Activated CD4-positive, alpha-beta memory T cell treated with anti-CD3 and anti-CD28 coated beads for 36 hours (primary cell): ENCODE measurements at regions of chr11 and their contacts with region 1.

Region 1: DNA sequence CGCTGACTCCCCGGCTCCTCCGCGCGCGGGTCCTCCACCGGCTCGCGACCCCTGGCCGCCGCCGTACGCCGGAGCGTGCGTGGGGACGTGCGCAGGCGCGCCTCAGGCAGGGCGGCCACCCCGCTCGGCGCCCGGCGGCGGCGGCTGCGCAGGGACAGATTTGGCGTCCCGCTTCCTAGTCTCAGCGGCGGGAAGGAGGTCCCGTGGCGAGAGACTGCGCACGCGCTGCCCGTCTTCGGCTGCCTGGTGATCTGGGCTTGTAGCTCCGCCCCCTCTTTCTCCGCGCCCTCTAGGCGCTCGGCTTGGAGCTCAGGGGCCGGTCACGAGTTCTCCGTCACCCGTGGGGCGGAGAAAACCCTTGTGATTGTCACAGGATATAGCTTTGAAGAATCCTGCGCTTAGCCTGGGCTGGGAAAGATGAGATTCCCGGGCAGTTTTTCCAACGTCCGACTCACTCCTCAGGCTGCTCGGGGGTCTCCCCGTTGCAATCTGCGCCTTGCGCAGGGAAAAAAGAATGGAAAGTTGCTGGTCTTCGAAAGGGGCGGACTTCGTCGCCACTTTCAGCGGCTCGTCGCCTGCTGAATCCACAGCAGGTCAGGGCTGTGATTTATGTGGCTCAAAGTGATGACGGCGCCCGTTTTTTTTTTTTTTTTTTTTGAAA is at the start of gene PATL1:
- DNase-seq: peak; percentile 99
- H3K4me3 Mint-ChIP-seq: peak within 1 kb of the TSS; percentile 95
- H3K27ac Mint-ChIP-seq: peak within 1 kb of the TSS; percentile 97
- H3K4me1 Mint-ChIP-seq: peaks cover 39% of the 10 kb centered on the region
- H3K27me3 Mint-ChIP-seq: no peaks in the 10 kb centered on the region
- total RNA-seq, gene PATL1: 58.3 to 62.3 TPM

Region 2: DNA sequence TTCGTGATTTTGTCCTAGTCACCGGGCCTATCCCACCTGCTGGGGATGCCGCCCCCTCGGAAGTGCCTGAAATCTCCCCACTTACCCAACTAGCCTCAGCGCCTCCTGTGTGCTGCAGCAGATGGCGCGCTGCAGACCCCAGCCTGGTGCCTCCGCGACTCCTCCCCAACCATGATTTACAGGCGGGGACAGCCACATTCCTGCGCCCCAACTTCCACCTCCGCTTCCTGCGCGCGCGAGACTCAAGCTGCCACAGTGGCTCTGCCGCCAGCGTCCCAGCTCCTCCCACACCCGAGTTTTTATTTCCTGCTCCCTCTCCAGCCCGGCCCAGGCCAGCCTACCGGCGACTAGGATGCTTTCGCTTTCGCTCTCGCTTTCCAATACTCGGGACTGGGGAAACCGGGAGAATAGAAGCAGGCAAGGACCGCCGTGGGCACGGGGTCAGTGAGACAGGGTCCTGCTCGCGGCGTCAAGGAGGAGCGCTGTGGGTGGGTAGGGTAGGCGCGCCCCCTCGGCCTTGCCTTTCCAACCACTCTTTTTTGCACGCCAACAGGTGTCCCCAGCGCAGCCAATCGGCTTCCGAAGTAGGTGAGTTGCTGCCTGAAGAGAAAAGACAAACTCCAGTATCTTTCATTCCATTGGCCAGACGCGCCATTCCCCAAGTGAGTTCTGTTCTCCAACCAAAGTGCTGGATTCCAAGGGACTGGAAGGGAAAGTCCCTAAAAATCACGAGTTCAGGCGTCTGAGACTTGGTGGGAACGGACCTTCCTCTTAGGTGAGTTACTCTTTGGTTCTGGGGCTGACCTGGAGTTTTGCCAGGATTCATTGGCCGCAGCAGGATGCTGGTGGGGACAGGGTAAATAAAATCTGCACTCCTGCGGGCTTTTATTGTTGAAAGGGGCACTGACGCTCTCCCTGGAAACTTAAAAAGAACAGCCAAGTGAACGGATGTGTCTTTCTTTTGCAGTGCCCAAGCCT is 526.3 kb before region 1 on chr11 and contains the start of gene FAM111A:
- CTCF ChIA-PET with region 1: no interaction called
- POLR2A ChIA-PET with region 1: no interaction called
- intact Hi-C with region 1: loop called (anchors 10 kb)
- DNase-seq: peak; percentile 90
- H3K4me3 Mint-ChIP-seq: peak within 1 kb of the TSS; percentile 94
- H3K27ac Mint-ChIP-seq: peak within 1 kb of the TSS; percentile 93
- H3K4me1 Mint-ChIP-seq: peaks cover 50% of the 10 kb centered on the region
- H3K27me3 Mint-ChIP-seq: no peaks in the 10 kb centered on the region
- total RNA-seq, gene FAM111A: 87.6 to 87.8 TPM

Region 3: GRCh38 chr11:59534676-59535075 is 134.4 kb before region 1 on chr11:
- CTCF ChIA-PET with region 1: interaction called, 10 read pairs
- POLR2A ChIA-PET with region 1: no interaction called
- intact Hi-C with region 1: loop called (anchors 5 kb)
- DNase-seq: no peak
- H3K4me3 Mint-ChIP-seq: no peak overlapping the region
- H3K27ac Mint-ChIP-seq: no peak overlapping the region
- H3K4me1 Mint-ChIP-seq: peaks cover 11% of the 10 kb centered on the region
- H3K27me3 Mint-ChIP-seq: peaks cover 3% of the 10 kb centered on the region

Region 4: GRCh38 chr11:59560702-59561469 is 108.2 kb before region 1 on chr11:
- CTCF ChIA-PET with region 1: no interaction called
- POLR2A ChIA-PET with region 1: interaction called, 5 read pairs
- intact Hi-C with region 1: loop called (anchors 1 kb)
- DNase-seq: peak; percentile 90
- H3K4me3 Mint-ChIP-seq: peak overlapping the region; percentile 93
- H3K27ac Mint-ChIP-seq: peak overlapping the region; percentile 96
- H3K4me1 Mint-ChIP-seq: peaks cover 42% of the 10 kb centered on the region
- H3K27me3 Mint-ChIP-seq: peaks cover 4% of the 10 kb centered on the region

Region 5: DNA sequence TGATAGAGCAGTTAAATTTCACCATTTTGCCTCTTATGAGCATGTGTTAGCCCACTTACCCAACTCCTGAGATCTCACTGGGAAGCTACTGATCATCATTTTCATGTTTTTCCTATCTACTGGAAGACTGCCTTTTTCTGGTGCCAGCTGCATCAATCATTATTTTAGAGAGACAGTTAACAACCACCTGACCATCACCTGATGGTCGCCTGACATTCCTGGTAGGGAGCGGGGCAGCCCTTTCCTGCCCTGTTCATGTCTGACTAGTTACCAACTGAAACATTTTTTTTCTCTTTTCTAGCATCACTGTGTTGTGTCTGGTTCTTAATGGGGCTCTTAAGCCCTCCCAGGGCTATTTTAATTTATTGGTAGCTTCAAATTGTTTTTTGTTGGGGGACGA is 19.9 kb after region 1 on chr11:
- CTCF ChIA-PET with region 1: no interaction called
- POLR2A ChIA-PET with region 1: no interaction called
- intact Hi-C with region 1: no loop called
- DNase-seq: no peak
- H3K4me3 Mint-ChIP-seq: no peak overlapping the region
- H3K27ac Mint-ChIP-seq: no peak overlapping the region
- H3K4me1 Mint-ChIP-seq: no peaks in the 10 kb centered on the region
- H3K27me3 Mint-ChIP-seq: peaks cover 18% of the 10 kb centered on the region

Region 6: GRCh38 chr11:59710136-59710847 is 41.2 kb after region 1 on chr11:
- CTCF ChIA-PET with region 1: no interaction called
- POLR2A ChIA-PET with region 1: no interaction called
- intact Hi-C with region 1: no loop called
- DNase-seq: no peak
- H3K4me3 Mint-ChIP-seq: no peak overlapping the region
- H3K27ac Mint-ChIP-seq: no peak overlapping the region
- H3K4me1 Mint-ChIP-seq: no peaks in the 10 kb centered on the region
- H3K27me3 Mint-ChIP-seq: peaks cover 14% of the 10 kb centered on the region

Region 7: DNA sequence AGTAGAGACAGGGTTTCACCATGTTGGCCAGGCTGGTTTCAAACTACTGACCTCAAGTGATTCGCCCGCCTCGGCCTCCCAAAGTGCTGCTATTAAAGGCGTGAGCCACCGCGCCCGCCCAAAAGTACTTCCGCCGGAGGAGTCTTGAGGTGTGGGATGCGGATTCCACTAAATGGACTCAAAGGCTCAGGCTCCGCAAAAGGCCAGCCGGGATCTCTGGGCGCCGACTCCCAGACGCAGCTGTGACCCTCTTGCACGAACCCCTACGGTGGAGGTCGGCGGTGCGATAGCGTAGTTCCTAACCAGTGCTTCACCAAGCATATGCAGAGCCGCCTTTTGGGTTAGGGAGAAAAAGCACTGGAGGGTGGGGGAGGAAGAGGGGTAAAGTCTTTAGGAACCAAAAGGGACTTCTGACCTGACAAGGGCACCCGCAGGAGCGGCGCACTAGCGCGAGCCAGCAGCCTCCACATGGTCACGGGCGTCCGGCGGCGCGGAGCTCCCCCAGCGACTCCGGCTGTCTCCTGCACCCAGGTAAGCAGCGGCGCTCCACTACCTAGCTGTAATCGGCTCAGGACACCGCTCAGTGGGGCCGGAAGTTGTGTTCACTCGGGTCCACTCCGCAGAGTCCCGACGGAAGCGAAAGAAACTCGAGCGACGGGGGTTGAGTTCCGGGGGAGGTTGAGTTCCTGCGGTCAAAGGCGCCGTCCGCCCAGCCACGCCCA is 141.3 kb after region 1 on chr11 and contains the start of gene MRPL16:
- CTCF ChIA-PET with region 1: no interaction called
- POLR2A ChIA-PET with region 1: no interaction called
- intact Hi-C with region 1: loop called (anchors 1 kb)
- DNase-seq: peak; percentile 95
- H3K4me3 Mint-ChIP-seq: peak within 1 kb of the TSS; percentile 90
- H3K27ac Mint-ChIP-seq: peak within 1 kb of the TSS; percentile 86
- H3K4me1 Mint-ChIP-seq: peaks cover 20% of the 10 kb centered on the region
- H3K27me3 Mint-ChIP-seq: no peaks in the 10 kb centered on the region
- total RNA-seq, gene MRPL16: 80.2 to 80.5 TPM